ENCODE measurements at regions of chr1 and their contacts with region 1.

Region 1: DNA sequence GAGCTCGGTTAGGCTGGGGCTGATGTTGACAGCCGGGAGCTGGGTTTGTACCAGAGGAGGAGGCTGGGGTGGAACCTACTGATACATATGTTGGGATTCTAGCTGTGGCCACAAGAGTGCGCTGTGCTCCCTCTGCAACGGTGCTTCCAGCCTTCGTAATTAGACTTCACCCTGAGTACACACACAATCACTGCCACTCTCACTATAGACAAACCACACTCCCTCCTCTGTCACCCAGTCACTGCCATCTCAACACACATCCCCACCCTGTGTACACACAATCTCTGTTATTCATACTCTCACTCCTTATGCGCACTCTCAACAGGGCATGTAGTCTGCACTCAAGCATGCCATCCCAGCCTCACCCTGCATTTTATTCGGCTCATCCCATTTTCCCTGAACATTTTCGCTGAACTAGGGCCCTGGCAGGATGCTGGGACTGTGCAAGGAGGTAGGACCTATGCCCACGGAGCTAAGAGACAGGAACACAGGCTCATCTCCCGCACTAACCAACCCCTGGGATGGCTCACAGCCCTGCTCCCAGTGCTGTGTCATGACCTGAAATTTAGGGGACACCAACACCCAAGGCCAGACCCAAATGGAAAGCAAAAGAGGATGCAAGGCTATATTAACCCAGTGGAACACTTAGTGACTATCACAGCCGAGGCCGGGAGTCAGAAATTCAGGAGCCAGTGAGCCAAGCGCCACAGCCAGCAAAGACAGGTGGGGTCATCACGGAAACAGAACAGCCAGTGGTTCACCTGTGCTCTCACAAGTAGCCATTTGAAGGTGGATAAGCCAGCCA is 5.7 kb downstream of the GJB3 start:
- DNase-seq: peak; percentile 80
- ATAC-seq: peak; percentile 62

Region 2: GRCh38 chr1:34656731-34657130 is 130.0 kb before region 1 on chr1:
- intact Hi-C with region 1: no loop called
- DNase-seq: no peak
- ATAC-seq: no peak

Region 3: GRCh38 chr1:34865981-34866761 is 79.4 kb after region 1 on chr1:
- intact Hi-C with region 1: loop called (anchors 5 kb)
- DNase-seq: peak; percentile 93
- ATAC-seq: peak; percentile 86

Region 4: DNA sequence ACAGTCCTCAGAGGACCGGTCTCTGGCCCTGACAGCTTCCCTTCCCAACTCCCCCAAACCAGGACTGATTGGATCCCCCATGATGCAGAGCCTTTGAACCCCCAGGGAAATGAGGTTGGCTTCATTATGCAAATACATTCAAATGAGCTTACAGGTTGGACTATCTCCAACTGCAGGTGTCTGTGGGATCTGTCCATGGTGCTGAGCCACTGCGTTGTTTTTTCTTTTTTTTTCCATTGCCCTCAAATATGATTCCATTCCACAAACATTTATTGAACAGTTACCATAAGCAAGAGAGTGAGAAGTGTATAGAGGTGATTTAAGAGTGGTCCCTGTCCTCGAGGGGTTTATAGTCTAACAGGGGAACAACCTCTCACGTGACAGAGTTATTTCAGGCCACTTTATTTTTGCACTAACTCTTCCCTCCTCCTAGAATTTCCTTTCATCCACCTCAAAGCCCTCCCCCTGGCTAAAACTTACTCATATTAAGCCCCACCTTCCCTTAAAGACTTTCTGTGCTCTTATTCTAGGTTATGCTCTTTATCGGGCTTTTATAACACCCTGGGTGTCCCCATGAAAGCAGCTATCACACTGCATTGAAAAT is 120.9 kb after region 1 on chr1:
- intact Hi-C with region 1: no loop called
- DNase-seq: no peak
- ATAC-seq: no peak

Region 5: GRCh38 chr1:35164893-35165292 is 378.2 kb after region 1 on chr1:
- intact Hi-C with region 1: no loop called
- DNase-seq: no peak
- ATAC-seq: no peak

Measured in sciatic nerve (tissue), 2 donors.